Activated B cell treated with CpG ODN at 0.5 μM for 24 hours (primary cell): ENCODE measurements at regions of chr20 and their contacts with region 1.

Region 1: GRCh38 chr20:38165089-38165989 is at the start of gene TGM2:
- DNase-seq: peak; percentile 74
- ATAC-seq: peak; percentile 94
- H3K4me3 Mint-ChIP-seq: peak within 1 kb of the TSS; percentile 75
- H3K27ac Mint-ChIP-seq: no peak within 1 kb of the TSS
- H3K4me1 Mint-ChIP-seq: peaks cover 29% of the 10 kb centered on the region
- H3K27me3 Mint-ChIP-seq: no peaks in the 10 kb centered on the region
- CTCF ChIP-seq: no peak
- total RNA-seq, gene TGM2: 20.8 and 22.9 TPM in 2 replicates

Region 2: DNA sequence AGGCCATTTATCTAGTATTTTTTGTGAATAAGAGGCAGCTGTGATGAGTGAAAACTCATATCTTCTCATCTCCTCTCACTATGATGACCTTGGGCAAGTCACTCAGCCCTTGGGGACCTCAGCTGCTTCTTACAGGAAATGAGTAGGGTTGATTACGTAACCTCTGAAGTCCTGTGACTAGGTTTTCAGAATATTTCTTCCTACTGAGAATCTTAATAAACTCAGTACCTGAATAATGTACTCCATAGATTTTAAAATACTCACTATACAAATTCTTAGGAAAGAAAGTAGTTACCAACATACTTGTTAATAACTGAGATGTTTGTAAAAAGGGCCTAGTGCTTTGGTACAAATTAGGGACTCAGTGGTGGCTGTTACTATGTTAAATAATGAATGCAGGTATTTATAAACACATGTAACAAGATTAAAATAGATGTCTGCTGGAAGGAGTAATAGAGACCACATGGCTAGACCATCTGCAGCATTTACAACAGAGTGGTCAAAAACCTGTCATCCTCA is 70.9 kb before region 1 on chr20:
- CTCF ChIA-PET with region 1: interaction called, 3 read pairs
- POLR2A ChIA-PET with region 1: no interaction called
- intact Hi-C with region 1: loop called (anchors 1 kb)
- DNase-seq: no peak
- ATAC-seq: peak; percentile 70
- H3K4me3 Mint-ChIP-seq: peak overlapping the region; percentile 71
- H3K27ac Mint-ChIP-seq: peak overlapping the region; percentile 96
- H3K4me1 Mint-ChIP-seq: peaks cover 87% of the 10 kb centered on the region
- H3K27me3 Mint-ChIP-seq: no peaks in the 10 kb centered on the region
- CTCF ChIP-seq: no peak

Region 3: GRCh38 chr20:38113401-38114325 is 51.7 kb before region 1 on chr20:
- CTCF ChIA-PET with region 1: no interaction called
- POLR2A ChIA-PET with region 1: no interaction called
- intact Hi-C with region 1: loop called (anchors 5 kb)
- DNase-seq: no peak
- ATAC-seq: peak; percentile 40
- H3K4me3 Mint-ChIP-seq: no peak overlapping the region
- H3K27ac Mint-ChIP-seq: no peak overlapping the region
- H3K4me1 Mint-ChIP-seq: peaks cover 6% of the 10 kb centered on the region
- H3K27me3 Mint-ChIP-seq: no peaks in the 10 kb centered on the region
- CTCF ChIP-seq: no peak

Region 4: GRCh38 chr20:38242848-38243449 is 77.6 kb after region 1 on chr20:
- CTCF ChIA-PET with region 1: no interaction called
- POLR2A ChIA-PET with region 1: no interaction called
- intact Hi-C with region 1: no loop called
- DNase-seq: no peak
- ATAC-seq: no peak
- H3K4me3 Mint-ChIP-seq: no peak overlapping the region
- H3K27ac Mint-ChIP-seq: no peak overlapping the region
- H3K4me1 Mint-ChIP-seq: no peaks in the 10 kb centered on the region
- H3K27me3 Mint-ChIP-seq: peaks cover 12% of the 10 kb centered on the region
- CTCF ChIP-seq: no peak